Left lung (tissue), 14 donors: ENCODE measurements at regions of chr1 and their contacts with region 1.

Region 1: DNA sequence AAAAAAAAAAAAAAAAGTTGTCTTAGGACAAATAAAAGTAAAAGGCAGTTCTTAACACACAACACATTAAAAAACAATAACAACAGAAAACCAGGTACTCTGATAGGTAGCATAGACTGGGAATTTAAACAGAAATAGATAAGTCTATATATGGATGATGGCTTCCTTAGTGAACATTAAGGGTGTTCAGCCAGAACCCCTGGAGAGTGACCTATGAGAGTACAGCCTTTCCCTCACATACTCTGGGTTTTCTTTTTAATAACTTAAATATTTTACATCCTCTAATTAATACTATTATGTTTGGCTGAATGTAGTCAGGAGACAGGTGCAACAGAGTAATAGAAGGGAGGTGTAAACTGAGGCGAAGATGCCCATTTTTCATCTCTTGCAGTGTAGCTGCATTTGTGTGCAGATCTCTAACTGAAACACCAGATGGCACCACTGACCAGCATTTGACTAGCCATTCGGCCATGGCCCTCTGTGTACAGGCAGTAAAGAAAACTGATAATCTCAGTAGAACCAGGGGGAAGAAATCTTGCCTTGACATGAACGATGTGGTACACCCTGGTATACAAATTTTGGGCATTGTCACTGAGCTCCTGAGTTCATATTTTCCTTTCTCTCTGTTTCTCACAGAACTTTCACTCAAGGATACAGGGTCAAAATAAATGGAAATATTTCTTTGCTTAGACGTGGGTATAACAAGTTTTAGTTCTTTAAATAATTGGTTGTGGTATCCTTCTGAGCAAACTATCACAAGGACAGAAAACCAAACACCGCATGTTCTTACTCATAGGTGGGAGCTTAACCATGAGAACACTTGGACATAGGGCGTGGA is 7.6 kb downstream of the TTF2 start:
- DNase-seq: peak in 3 of 4 donors; percentile 31 to 66 (median 40)
- ATAC-seq: peak; percentile 99
- H3K4me3 ChIP-seq: no peak overlapping the region
- H3K27ac ChIP-seq: no peak overlapping the region
- H3K4me1 ChIP-seq: no peaks in the 10 kb centered on the region
- H3K27me3 ChIP-seq: no peaks in the 10 kb centered on the region
- CTCF ChIP-seq: peak; percentile 67 to 72

Region 2: DNA sequence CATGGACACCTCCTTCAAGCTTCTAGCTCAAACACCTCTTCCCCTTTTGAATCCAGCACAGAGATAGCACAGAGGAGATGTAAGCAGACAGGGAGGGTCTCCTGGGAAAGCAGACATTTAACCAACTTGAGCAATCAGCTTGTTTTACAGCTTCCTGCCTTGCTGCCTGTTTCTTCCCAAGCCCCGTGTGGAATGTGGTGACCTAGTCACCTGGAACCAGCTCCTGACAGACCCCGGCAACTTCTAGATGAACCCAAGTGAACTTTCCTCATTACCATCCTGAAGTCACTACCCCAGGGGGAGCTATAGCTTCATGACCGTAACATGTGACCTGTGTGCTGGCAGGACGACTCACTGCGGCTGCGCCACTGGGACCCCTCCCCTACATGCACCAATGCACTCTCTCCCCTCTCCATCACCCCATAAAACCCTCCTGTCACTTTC is 31.7 kb before region 1 on chr1:
- intact Hi-C with region 1: no loop called
- DNase-seq: no peak
- ATAC-seq: no peak
- H3K4me3 ChIP-seq: no peak overlapping the region
- H3K27ac ChIP-seq: no peak overlapping the region
- H3K4me1 ChIP-seq: no peaks in the 10 kb centered on the region
- H3K27me3 ChIP-seq: no peaks in the 10 kb centered on the region
- CTCF ChIP-seq: no peak

Region 3: GRCh38 chr1:117121776-117122697 is 54.3 kb after region 1 on chr1:
- intact Hi-C with region 1: loop called in 1 of 2 experiments (anchors 5 kb)
- DNase-seq: peak; percentile 95 to 99 (median 98)
- ATAC-seq: peak; percentile 98
- H3K4me3 ChIP-seq: peak overlapping the region; percentile 44 to 54
- H3K27ac ChIP-seq: peak overlapping the region; percentile 83 to 92
- H3K4me1 ChIP-seq: peaks cover 0 to 14% of the 10 kb centered on the region in 2 donors
- H3K27me3 ChIP-seq: no peaks in the 10 kb centered on the region
- CTCF ChIP-seq: peak; percentile 64 to 67

Region 4: DNA sequence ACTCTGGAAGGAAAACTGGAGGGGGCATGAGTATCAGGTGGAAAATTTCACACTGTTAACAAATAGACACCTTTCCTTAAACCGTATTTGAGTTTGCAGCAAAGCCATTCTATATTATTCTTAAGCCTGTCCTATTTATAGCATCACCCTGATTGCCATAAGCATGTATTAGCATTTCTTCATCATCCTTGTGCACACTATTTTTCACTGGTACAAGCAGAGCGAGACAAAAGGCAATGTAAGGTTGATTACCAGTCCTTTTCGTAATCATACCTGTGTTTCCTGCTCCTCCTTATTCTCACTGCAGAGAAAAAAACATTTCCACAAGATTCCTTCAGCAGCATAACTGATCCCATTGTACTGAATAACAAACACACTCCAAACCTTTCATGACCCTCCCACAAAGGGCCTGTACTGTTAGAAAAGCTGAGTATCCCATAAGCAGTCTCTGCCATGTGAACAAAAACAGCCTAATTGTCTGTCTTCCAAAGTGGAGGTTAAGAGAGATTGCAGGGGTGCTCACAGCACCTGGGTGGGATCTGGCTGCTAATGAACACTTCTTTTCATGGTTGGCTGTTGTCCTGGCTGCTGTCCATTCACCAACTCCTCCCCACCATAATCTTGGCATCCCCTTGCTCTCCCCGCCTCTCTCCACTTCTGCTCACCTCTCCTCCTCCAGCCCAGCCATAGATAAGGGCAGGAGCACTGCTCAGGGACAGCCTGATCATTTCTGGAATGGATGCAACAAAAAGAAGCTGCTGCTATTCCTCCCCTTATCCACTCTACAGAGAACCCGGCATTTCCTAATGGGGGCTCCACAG is 112.6 kb after region 1 on chr1:
- intact Hi-C with region 1: no loop called
- DNase-seq: no peak
- ATAC-seq: no peak
- H3K4me3 ChIP-seq: no peak overlapping the region
- H3K27ac ChIP-seq: no peak overlapping the region
- H3K4me1 ChIP-seq: no peaks in the 10 kb centered on the region
- H3K27me3 ChIP-seq: no peaks in the 10 kb centered on the region
- CTCF ChIP-seq: no peak

Region 5: DNA sequence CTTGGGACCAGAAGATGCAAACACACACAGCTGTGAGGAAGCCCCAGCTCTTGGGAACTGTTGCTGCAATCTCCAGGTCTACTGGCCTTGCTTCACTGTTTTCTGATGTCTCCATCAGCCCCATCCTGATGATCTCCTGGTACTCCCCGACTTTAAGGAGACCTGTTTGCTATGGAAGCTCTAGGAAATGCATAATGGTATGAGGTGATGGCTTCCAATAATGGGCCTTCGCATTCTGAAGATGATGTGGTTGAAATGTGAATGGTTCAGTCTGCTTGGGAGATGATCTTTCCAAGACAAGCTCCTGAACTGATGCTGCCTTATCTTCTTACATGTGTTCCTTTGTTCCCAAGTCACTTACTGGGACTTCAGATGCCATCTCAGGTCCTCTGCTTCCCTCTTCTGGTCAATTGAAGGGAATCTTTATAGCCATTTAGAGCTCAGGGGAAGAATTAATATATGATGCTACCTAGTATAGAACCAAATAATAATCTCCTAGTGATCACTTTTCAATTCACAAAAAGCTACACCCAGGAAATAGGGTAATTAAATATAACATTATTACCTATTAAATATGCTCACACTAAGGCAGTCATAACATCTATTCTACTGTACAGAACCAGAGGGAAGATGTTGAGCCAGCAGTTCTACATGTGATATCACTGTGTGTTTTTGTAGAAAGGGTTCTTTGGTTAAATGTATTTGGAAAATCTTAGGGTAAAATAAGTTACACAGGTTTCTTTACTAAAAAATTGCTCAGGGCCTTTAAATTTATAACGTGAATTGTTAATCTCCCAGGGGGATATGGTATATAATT is 216.9 kb after region 1 on chr1:
- intact Hi-C with region 1: loop called in 1 of 2 experiments (anchors 5 kb)
- DNase-seq: peak in 2 of 4 donors; percentile 49 to 79
- ATAC-seq: peak; percentile 92
- H3K4me3 ChIP-seq: no peak overlapping the region
- H3K27ac ChIP-seq: no peak overlapping the region
- H3K4me1 ChIP-seq: no peaks in the 10 kb centered on the region
- H3K27me3 ChIP-seq: no peaks in the 10 kb centered on the region
- CTCF ChIP-seq: peak in 1 of 2 donors; percentile 47